ENCODE measurements at regions of chr19 and their contacts with region 1.

Region 1: DNA sequence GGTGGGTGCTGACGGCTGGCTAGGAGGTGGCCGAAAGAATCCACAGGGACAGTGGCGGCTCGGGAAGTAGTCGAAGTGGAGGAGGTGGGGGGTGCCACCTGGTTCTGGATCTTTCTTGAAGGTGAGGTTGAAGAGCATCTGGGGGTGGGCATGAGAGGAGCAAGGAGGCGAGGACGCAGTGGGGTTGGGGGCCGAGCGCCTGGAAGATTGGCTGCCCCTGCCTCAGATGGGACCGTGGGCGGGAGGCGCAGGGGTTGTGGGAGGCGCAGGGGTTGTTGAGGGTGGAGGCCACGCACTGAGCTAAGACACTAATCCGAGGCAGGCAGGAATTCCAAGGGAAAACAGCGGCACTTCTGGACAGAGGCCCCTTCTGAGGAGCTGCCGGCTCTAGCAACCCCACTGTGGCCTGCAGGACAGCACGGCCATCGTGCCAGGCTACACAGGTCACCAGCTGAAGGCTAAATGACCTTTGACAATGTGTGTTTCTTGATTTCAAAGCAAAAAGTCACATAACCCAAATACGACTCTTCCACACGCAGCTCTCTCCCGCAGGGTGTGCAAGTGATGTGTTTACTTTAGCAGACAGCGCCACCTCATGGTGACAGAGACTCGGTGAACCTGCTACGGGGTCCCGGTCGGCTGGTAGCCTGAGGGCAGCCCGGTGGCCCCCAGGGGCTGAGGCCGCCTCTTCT is 44.1 kb upstream of the RANBP3 start:
- DNase-seq: peak; percentile 88
- H3K4me3 ChIP-seq: no peak overlapping the region
- H3K27ac ChIP-seq: no peak overlapping the region
- H3K4me1 ChIP-seq: no peaks in the 10 kb centered on the region
- H3K27me3 ChIP-seq: no peaks in the 10 kb centered on the region
- CTCF ChIP-seq: peak; percentile 85

Region 2: GRCh38 chr19:5913739-5914357 is 108.2 kb before region 1 on chr19 and contains the start of gene CAPS:
- CTCF ChIA-PET with region 1: no interaction called
- POLR2A ChIA-PET with region 1: no interaction called
- intact Hi-C with region 1: no loop called
- DNase-seq: no peak
- H3K4me3 ChIP-seq: no peak within 1 kb of the TSS
- H3K27ac ChIP-seq: no peak within 1 kb of the TSS
- H3K4me1 ChIP-seq: no peaks in the 10 kb centered on the region
- H3K27me3 ChIP-seq: no peaks in the 10 kb centered on the region
- CTCF ChIP-seq: no peak
- total RNA-seq, gene CAPS: 0.92 and 1.7 TPM in 2 replicates

Region 3: DNA sequence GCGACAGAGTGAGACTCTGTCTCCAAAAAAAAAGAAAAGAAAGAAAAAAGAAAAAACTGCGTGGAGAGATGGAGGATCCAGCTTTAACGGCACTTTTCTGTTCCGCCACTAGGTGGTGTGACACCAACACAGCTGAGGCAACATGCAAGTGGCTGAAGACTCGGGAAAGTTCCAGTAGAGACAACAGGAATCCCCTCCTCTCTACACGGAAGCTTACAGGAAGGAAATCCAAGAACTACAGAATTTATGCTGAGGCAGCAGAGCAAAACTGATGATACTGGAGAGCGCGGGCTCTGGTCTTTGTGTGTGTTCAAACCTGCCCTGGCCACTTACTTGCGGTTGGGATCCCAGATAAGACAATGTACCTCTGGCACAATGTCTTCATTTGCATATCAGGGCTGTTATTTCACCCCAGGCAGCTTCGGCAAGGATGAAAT is 54.0 kb before region 1 on chr19:
- CTCF ChIA-PET with region 1: interaction called, 18 read pairs
- POLR2A ChIA-PET with region 1: no interaction called
- intact Hi-C with region 1: no loop called
- DNase-seq: peak; percentile 89
- H3K4me3 ChIP-seq: no peak overlapping the region
- H3K27ac ChIP-seq: peak overlapping the region; percentile 75
- H3K4me1 ChIP-seq: peaks cover 25% of the 10 kb centered on the region
- H3K27me3 ChIP-seq: no peaks in the 10 kb centered on the region
- CTCF ChIP-seq: peak; percentile 92

Region 4: GRCh38 chr19:5987077-5987818 is 34.8 kb before region 1 on chr19:
- CTCF ChIA-PET with region 1: interaction called, 13 read pairs
- POLR2A ChIA-PET with region 1: no interaction called
- intact Hi-C with region 1: loop called (anchors 2 kb)
- DNase-seq: peak; percentile 83
- H3K4me3 ChIP-seq: peak overlapping the region; percentile 34
- H3K27ac ChIP-seq: no peak overlapping the region
- H3K4me1 ChIP-seq: peaks cover 23% of the 10 kb centered on the region
- H3K27me3 ChIP-seq: no peaks in the 10 kb centered on the region
- CTCF ChIP-seq: peak; percentile 97

Region 5: DNA sequence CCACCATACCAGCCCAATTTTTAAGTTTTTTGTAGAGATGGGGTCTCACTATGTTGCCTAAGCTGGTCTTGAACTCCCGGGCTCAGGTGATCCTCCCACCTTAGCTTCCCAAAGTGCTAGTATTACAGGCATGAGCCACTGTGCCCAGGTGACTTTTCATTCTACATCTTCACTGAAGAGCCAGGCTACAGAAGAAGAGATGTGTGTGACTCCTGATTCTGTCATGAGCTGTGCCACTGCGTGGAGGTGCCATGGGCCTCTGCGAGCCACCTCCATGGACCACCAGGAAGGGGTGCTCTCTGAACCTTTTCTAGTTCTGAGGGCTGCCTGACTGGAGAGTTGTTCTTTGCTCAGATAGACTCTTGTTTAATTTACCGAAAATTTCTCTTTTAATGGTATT is 12.5 kb after region 1 on chr19:
- CTCF ChIA-PET with region 1: interaction called, 3 read pairs
- POLR2A ChIA-PET with region 1: interaction called, 15 read pairs
- intact Hi-C with region 1: no loop called
- DNase-seq: no peak
- H3K4me3 ChIP-seq: no peak overlapping the region
- H3K27ac ChIP-seq: no peak overlapping the region
- H3K4me1 ChIP-seq: no peaks in the 10 kb centered on the region
- H3K27me3 ChIP-seq: no peaks in the 10 kb centered on the region
- CTCF ChIP-seq: no peak

Region 6: GRCh38 chr19:6138066-6138465 is 116.0 kb after region 1 on chr19:
- CTCF ChIA-PET with region 1: no interaction called
- POLR2A ChIA-PET with region 1: no interaction called
- intact Hi-C with region 1: no loop called
- DNase-seq: no peak
- H3K4me3 ChIP-seq: no peak overlapping the region
- H3K27ac ChIP-seq: no peak overlapping the region
- H3K4me1 ChIP-seq: no peaks in the 10 kb centered on the region
- H3K27me3 ChIP-seq: no peaks in the 10 kb centered on the region
- CTCF ChIP-seq: no peak